SK-N-SH (cell line): ENCODE measurements at regions of chr3 and their contacts with region 1.

Region 1: GRCh38 chr3:42961633-42962032 is 17.5 kb upstream of the GASK1A start:
- DNase-seq: peak; percentile 65
- H3K4me3 ChIP-seq: no peak overlapping the region
- H3K27ac ChIP-seq: no peak overlapping the region
- H3K4me1 ChIP-seq: no peaks in the 10 kb centered on the region
- H3K27me3 ChIP-seq: no peaks in the 10 kb centered on the region
- CTCF ChIP-seq: peak; percentile 69
- EP300 ChIP-seq: no peak
- RAD21 ChIP-seq: peak; percentile 88

Region 2: DNA sequence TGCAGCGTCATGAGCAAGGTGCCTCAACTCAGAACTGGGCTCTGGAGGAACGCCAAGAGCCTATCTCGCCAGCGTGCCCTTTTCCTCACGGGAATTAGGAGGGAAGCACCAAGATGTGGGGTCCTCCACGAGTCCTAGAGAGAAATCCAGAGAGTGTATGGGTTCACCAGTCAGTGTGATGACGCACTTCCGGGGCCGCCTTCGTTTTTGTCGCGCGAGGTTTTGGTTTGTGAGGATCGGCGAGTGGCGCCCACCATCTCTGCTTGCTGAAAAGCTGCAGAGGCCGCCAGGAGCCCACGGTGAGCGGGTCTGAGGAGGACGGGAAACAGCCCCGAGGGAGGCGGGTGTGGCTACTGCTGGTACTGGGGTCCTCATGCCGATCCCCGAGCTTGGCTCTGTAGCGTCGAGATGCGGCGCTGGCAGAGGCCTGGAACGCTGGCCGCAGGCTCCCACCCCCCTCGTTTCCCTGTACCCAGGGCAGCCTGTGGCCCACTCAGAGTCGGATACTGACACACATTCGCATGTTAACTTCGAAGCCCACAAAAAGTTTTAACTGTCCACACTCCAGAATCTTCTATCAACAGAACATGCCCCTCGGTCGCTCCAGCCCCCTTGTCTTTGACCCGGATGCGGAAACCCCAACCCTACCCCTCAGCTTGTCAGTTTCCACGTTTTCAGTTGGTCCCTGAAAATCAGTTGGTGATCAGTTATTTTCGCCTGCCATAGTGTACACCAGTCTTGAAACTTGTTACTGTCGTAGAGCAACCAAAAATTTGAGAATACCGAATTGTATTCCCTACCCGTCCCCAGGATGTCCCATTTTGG is 25.3 kb before region 1 on chr3:
- CTCF ChIA-PET with region 1: interaction called, 15 read pairs
- POLR2A ChIA-PET with region 1: no interaction called
- DNase-seq: no peak
- H3K4me3 ChIP-seq: no peak overlapping the region
- H3K27ac ChIP-seq: no peak overlapping the region
- H3K4me1 ChIP-seq: no peaks in the 10 kb centered on the region
- H3K27me3 ChIP-seq: no peaks in the 10 kb centered on the region; the same call in 1 of the 2 replicates
- CTCF ChIP-seq: no peak
- EP300 ChIP-seq: no peak
- RAD21 ChIP-seq: no peak

Region 3: GRCh38 chr3:42979044-42979972 is 17.7 kb after region 1 on chr3 and contains the start of gene GASK1A:
- CTCF ChIA-PET with region 1: interaction called, 46 read pairs
- POLR2A ChIA-PET with region 1: no interaction called
- DNase-seq: peak; percentile 76
- H3K4me3 ChIP-seq: peak within 1 kb of the TSS; percentile 41
- H3K27ac ChIP-seq: no peak within 1 kb of the TSS
- H3K4me1 ChIP-seq: peaks cover 0 to 4% of the 10 kb centered on the region in 2 experiments; a peak in 1 of 4 replicates
- H3K27me3 ChIP-seq: peaks cover 17% of the 10 kb centered on the region; the same call in 1 of the 2 replicates
- CTCF ChIP-seq: no peak
- EP300 ChIP-seq: no peak
- RAD21 ChIP-seq: no peak
- polyA plus RNA-seq, gene GASK1A: not detected in 2 replicates

Region 4: DNA sequence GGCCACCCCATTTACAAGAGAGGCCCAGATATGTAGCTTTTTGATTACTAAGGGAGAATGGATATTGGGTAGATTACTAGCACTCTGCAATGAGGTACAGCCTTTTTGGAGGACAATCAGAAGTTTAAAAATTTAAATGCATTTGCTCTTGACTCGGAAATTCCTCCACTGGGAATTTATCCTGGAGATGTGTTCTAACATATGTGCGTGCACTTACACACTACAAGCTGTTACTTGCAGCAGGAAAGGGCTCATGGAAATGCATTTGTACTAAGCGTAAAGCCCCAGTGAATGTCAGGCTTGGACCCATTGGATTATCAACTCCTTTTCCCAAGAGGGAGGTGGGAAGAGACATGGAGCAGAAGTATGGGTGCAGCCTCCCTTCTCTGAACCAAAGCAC is 152.0 kb after region 1 on chr3:
- CTCF ChIA-PET with region 1: interaction called, 10 read pairs
- POLR2A ChIA-PET with region 1: no interaction called
- DNase-seq: no peak
- H3K4me3 ChIP-seq: no peak overlapping the region
- H3K27ac ChIP-seq: no peak overlapping the region
- H3K4me1 ChIP-seq: no peaks in the 10 kb centered on the region
- H3K27me3 ChIP-seq: peaks cover 5% of the 10 kb centered on the region; the same call in 1 of the 2 replicates
- CTCF ChIP-seq: no peak
- EP300 ChIP-seq: no peak
- RAD21 ChIP-seq: no peak

Region 5: GRCh38 chr3:43162230-43163084 is 200.8 kb after region 1 on chr3:
- CTCF ChIA-PET with region 1: interaction called, 48 read pairs
- POLR2A ChIA-PET with region 1: no interaction called
- DNase-seq: peak; percentile 47
- H3K4me3 ChIP-seq: no peak overlapping the region; a peak in 1 of 4 replicates
- H3K27ac ChIP-seq: no peak overlapping the region
- H3K4me1 ChIP-seq: peaks cover 0 to 6% of the 10 kb centered on the region in 2 experiments; a peak in 1 of 4 replicates
- H3K27me3 ChIP-seq: peaks cover 6% of the 10 kb centered on the region; the same call in 1 of the 2 replicates
- CTCF ChIP-seq: peak; percentile 46
- EP300 ChIP-seq: no peak
- RAD21 ChIP-seq: peak; percentile 88

Region 6: DNA sequence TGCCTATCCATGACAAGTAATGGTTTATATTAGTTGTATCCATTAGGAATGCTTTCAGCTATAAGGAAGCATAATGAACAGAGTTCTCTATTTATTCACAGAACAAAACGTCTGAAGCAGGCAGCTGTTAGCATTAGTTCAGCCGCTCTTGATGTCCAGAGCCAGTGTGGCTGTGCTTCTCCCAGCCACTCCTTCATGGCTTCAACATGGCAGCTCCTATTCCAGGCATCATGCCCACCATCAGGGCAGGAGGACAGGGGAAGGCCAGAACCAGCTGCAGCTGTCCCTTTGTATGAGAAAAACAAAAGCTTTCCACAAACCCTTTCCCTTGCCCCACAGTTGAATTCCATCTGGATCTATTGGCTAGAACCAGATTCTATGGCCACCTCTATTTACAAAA is 311.8 kb after region 1 on chr3:
- CTCF ChIA-PET with region 1: no interaction called
- POLR2A ChIA-PET with region 1: no interaction called
- DNase-seq: no peak
- H3K4me3 ChIP-seq: no peak overlapping the region
- H3K27ac ChIP-seq: no peak overlapping the region
- H3K4me1 ChIP-seq: no peaks in the 10 kb centered on the region
- H3K27me3 ChIP-seq: no peaks in the 10 kb centered on the region; the same call in 1 of the 2 replicates
- CTCF ChIP-seq: no peak
- EP300 ChIP-seq: no peak
- RAD21 ChIP-seq: no peak

Region 7: DNA sequence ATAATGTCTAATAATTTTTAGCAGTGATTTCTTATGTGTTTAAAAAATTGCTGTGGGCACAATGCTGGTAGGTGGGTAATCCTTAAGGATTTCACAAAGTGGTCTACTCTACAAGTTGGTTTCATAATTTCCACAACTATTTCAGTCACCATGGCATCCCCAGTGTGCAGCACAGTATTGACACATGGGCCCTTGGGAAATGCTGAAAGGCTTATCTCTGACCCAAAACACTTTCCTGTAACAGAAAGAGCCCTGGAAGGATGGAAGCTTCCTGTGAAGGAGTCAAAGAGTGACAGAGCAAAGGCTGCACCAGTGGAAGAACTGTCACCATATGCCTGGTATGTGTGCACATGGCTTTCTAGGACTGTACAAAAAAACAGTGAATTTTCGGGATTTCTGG is 506.5 kb after region 1 on chr3:
- CTCF ChIA-PET with region 1: no interaction called
- POLR2A ChIA-PET with region 1: no interaction called
- DNase-seq: no peak
- H3K4me3 ChIP-seq: no peak overlapping the region
- H3K27ac ChIP-seq: no peak overlapping the region
- H3K4me1 ChIP-seq: no peaks in the 10 kb centered on the region; a peak in 1 of 4 replicates
- H3K27me3 ChIP-seq: no peaks in the 10 kb centered on the region
- CTCF ChIP-seq: no peak
- EP300 ChIP-seq: no peak
- RAD21 ChIP-seq: no peak

Region 8: GRCh38 chr3:43503067-43503728 is 541.6 kb after region 1 on chr3:
- CTCF ChIA-PET with region 1: interaction called, 53 read pairs
- POLR2A ChIA-PET with region 1: no interaction called
- DNase-seq: peak; percentile 23
- H3K4me3 ChIP-seq: no peak overlapping the region
- H3K27ac ChIP-seq: no peak overlapping the region
- H3K4me1 ChIP-seq: no peaks in the 10 kb centered on the region; a peak in 1 of 4 replicates
- H3K27me3 ChIP-seq: no peaks in the 10 kb centered on the region
- CTCF ChIP-seq: peak; percentile 74
- EP300 ChIP-seq: no peak
- RAD21 ChIP-seq: peak; percentile 76

Region 9: DNA sequence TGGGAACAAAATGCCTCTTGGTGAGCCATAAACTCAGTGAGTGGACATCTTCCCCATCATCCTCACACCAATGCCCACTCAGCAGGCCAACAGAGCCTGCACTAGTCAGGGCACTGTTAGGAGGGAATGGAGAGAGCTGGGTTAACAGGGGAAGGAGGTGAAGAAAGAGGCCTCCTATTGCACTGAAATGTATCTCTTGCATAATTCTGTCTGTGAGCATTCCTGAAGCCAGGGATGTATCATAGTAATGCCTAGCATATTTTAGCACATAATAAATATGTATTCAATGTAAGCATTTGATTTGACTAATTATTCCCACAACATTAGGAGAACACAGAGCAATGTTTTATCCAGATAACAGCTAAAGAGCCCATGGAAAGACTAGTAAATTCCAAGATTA is 579.0 kb after region 1 on chr3:
- CTCF ChIA-PET with region 1: interaction called, 10 read pairs
- POLR2A ChIA-PET with region 1: no interaction called
- DNase-seq: no peak
- H3K4me3 ChIP-seq: no peak overlapping the region
- H3K27ac ChIP-seq: no peak overlapping the region
- H3K4me1 ChIP-seq: peaks cover 0 to 5% of the 10 kb centered on the region in 2 experiments; a peak in 1 of 4 replicates
- H3K27me3 ChIP-seq: no peaks in the 10 kb centered on the region
- CTCF ChIP-seq: no peak
- EP300 ChIP-seq: no peak
- RAD21 ChIP-seq: no peak